Adrenal gland (tissue), 19 donors: ENCODE measurements at regions of chr6 and their contacts with region 1.

Region 1: GRCh38 chr6:97068211-97068610 is 143.7 kb downstream of the KLHL32 start:
- DNase-seq: peak in 2 of 7 donors; percentile 10 to 14
- H3K4me3 ChIP-seq: no peak overlapping the region
- H3K27ac ChIP-seq: no peak overlapping the region
- H3K4me1 ChIP-seq: no peaks in the 10 kb centered on the region
- H3K27me3 ChIP-seq: no peaks in the 10 kb centered on the region
- CTCF ChIP-seq: peak; percentile 44 to 69 (median 54)
- POLR2A ChIP-seq: no peak

Region 2: DNA sequence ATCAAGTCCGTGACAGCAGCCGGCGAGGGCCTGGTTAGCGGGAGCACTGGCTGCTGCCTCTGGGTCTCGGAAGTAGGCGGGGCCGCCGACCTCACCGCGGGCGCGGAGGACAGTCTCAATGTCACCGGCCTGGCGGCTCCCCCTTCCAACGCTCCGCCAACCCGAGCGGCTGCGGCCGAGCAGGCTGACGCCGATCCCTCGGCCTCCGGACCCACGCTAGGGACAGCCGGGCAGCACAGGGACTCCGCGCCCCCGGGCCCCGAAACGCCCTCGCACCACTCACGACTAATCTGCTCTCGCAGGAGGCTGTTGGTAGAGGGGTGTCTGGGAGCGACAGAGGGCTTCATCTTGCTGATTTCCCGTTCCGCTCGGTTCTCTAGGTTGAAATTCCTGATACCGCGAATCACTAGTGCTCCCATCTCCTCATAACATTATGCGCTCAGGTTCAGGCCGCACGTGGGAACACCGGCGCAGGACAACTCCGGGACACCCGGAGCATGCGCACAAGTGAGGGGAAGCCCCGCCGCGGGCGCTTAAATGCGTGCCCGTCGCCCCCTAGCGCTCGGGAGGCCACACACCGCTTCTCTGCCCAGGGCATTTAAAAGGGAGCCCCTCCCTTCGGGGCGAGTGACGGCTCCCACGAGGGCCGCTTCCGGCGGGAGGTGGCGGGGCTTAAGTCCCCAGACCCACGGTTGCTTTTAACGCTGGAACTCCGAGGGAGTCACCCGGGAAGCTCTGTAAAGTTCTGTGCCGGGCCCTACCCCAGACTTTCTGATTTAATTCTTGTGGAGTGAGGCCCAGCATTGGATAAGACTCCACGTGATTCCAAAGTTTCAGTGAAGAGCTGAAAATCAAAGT is 170.6 kb before region 1 on chr6 and contains the start of gene NDUFAF4:
- intact Hi-C with region 1: loop called in 1 of 2 experiments (anchors 5 kb)
- DNase-seq: peak; percentile 95 to 98 (median 97)
- H3K4me3 ChIP-seq: peak within 1 kb of the TSS; percentile 48 to 91 (median 86)
- H3K27ac ChIP-seq: peak within 1 kb of the TSS; percentile 86 to 98 (median 88)
- H3K4me1 ChIP-seq: peaks cover 17 to 26% of the 10 kb centered on the region in 2 donors
- H3K27me3 ChIP-seq: no peaks in the 10 kb centered on the region
- CTCF ChIP-seq: peak; percentile 80 to 98 (median 96)
- POLR2A ChIP-seq: peak in 1 of 2 donors; percentile 70
- total RNA-seq, gene NDUFAF4: 11.4 to 73.5 (median 29.0) TPM

Region 3: DNA sequence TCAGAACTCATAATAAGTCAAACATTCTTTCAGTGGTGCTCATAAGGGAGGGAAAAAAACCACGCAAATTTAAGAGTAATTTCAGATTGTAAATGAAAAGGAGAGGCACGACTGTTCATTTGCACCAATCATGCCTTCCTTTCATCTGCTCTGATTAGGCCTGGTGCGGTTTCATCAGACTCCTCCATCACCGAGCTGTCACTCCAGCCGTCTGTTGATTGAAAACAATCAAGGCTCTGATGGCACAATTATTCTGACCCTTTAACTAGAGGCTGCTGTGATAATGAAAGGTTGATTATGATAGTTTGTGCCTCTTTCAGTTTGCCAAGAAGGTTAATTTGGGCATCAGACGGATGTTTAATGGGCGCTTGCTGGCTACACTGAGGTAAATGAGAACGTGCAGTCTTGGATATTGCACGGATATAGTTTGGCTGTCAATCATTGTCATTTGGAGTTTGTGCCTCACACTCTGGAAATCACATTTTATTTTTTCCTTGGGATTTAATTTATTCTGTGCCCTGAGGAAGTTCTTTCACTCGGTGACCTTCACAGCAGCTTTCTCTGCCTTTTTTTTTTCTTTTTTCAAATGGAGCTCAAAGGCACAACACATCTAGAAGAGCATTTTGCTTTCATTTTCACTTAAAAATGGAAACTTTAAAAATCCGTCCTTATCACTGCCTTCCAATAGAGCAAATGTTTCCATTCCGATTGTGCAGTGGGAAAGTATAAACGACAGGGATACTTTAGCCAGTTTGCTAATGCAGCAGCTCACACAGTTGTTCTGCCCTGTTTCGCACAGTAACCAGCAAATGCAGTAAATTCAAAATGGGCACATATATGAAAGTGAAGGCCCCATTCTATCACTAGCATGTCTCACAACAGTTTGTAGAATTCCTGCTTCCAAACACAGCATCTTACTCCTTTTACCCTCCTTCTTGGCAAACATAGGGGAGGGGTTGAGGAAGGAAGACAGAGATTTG is 29.1 kb after region 1 on chr6:
- intact Hi-C with region 1: no loop called
- DNase-seq: no peak
- H3K4me3 ChIP-seq: peak overlapping the region in 2 of 4 donors; percentile 23 to 44
- H3K27ac ChIP-seq: peak overlapping the region in 2 of 5 donors; percentile 28 to 47
- H3K4me1 ChIP-seq: no peaks in the 10 kb centered on the region
- H3K27me3 ChIP-seq: no peaks in the 10 kb centered on the region
- CTCF ChIP-seq: no peak
- POLR2A ChIP-seq: no peak

Region 4: GRCh38 chr6:97186416-97186999 is 118.3 kb after region 1 on chr6:
- intact Hi-C with region 1: loop called in 1 of 2 experiments (anchors 5 kb)
- DNase-seq: peak; percentile 54 to 89 (median 69)
- H3K4me3 ChIP-seq: no peak overlapping the region
- H3K27ac ChIP-seq: no peak overlapping the region
- H3K4me1 ChIP-seq: no peaks in the 10 kb centered on the region
- H3K27me3 ChIP-seq: no peaks in the 10 kb centered on the region
- CTCF ChIP-seq: peak; percentile 63 to 90 (median 73)
- POLR2A ChIP-seq: no peak

Region 5: GRCh38 chr6:97394160-97394748 is 326.0 kb after region 1 on chr6:
- intact Hi-C with region 1: loop called in 1 of 2 experiments (anchors 5 kb)
- DNase-seq: peak; percentile 26 to 68 (median 39)
- H3K4me3 ChIP-seq: no peak overlapping the region
- H3K27ac ChIP-seq: no peak overlapping the region
- H3K4me1 ChIP-seq: no peaks in the 10 kb centered on the region
- H3K27me3 ChIP-seq: no peaks in the 10 kb centered on the region
- CTCF ChIP-seq: peak; percentile 69 to 96 (median 89)
- POLR2A ChIP-seq: no peak